ENCODE measurements at regions of chr6 and their contacts with region 1.

Region 1: GRCh38 chr6:79630883-79631692 is at the start of gene SH3BGRL2:
- DNase-seq: peak; percentile 64 to 89 (median 78)
- ATAC-seq: peak; percentile 97
- H3K4me3 ChIP-seq: peak within 1 kb of the TSS; percentile 74
- H3K27ac ChIP-seq: peak within 1 kb of the TSS; percentile 56
- H3K4me1 ChIP-seq: peaks cover 14 to 19% of the 10 kb centered on the region in 2 experiments; a peak in 4 of 5 replicates
- H3K27me3 ChIP-seq: no peaks in the 10 kb centered on the region
- CTCF ChIP-seq: no peak
- EP300 ChIP-seq: no peak
- POLR2A ChIP-seq: peak; percentile 78
- RAD21 ChIP-seq: no peak
- polyA plus RNA-seq, gene SH3BGRL2: 4.4 to 5.0 TPM

Region 2: DNA sequence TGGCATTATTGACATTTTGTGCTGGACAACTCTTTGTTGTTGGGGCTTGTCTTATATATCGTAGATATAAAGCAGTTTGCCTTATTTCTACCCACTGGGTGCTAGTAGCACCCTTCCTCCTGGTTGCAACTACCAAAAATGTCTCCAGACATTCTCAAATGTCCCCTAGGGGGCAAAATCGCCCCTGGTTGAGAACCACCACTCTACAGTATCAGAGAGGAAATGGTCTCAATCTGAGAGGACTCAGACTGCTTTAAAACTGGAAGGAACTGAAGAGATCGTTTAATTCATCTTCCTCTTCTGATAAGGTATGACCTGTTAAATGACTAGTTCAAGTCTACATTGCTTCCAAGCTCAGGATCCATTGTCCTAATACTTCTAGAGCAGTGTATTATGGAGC is 14.9 kb after region 1 on chr6:
- CTCF ChIA-PET with region 1: no interaction called
- POLR2A ChIA-PET with region 1: interaction called, 34 read pairs
- in situ Hi-C with region 1: no loop called
- intact Hi-C with region 1: no loop called
- DNase-seq: peak in 2 of 4 experiments; percentile 31 to 57
- ATAC-seq: peak; percentile 93
- H3K4me3 ChIP-seq: no peak overlapping the region
- H3K27ac ChIP-seq: no peak overlapping the region
- H3K4me1 ChIP-seq: peaks cover 3 to 9% of the 10 kb centered on the region in 2 experiments; a peak in 2 of 5 replicates
- H3K27me3 ChIP-seq: no peaks in the 10 kb centered on the region
- CTCF ChIP-seq: peak; percentile 52 to 60 (median 54)
- EP300 ChIP-seq: no peak
- POLR2A ChIP-seq: no peak
- RAD21 ChIP-seq: peak in 1 of 2 experiments; percentile 60; a peak in 2 of 4 replicates

Region 3: GRCh38 chr6:79750806-79751205 is 119.7 kb after region 1 on chr6:
- CTCF ChIA-PET with region 1: no interaction called
- POLR2A ChIA-PET with region 1: no interaction called
- in situ Hi-C with region 1: no loop called
- intact Hi-C with region 1: no loop called
- DNase-seq: no peak
- ATAC-seq: no peak
- H3K4me3 ChIP-seq: no peak overlapping the region
- H3K27ac ChIP-seq: no peak overlapping the region
- H3K4me1 ChIP-seq: no peaks in the 10 kb centered on the region
- H3K27me3 ChIP-seq: no peaks in the 10 kb centered on the region
- CTCF ChIP-seq: no peak
- EP300 ChIP-seq: no peak
- POLR2A ChIP-seq: no peak
- RAD21 ChIP-seq: no peak

Measured in K562 (cell line).